ENCODE measurements at regions of chr1 and their contacts with region 1.

Region 1: GRCh38 chr1:82775402-82776000 is 974.8 kb downstream of the ADGRL2 start:
- DNase-seq: peak; percentile 6
- ATAC-seq: peak; percentile 72; the same call in 1 of the 2 replicates
- H3K4me3 ChIP-seq: no peak overlapping the region
- H3K27ac ChIP-seq: no peak overlapping the region
- H3K4me1 ChIP-seq: no peaks in the 10 kb centered on the region
- H3K27me3 ChIP-seq: no peaks in the 10 kb centered on the region
- CTCF ChIP-seq: peak; percentile 9 to 82 (median 71); a peak in 5 of 6 replicates
- POLR2A ChIP-seq: no peak
- RAD21 ChIP-seq: peak; percentile 52

Region 2: DNA sequence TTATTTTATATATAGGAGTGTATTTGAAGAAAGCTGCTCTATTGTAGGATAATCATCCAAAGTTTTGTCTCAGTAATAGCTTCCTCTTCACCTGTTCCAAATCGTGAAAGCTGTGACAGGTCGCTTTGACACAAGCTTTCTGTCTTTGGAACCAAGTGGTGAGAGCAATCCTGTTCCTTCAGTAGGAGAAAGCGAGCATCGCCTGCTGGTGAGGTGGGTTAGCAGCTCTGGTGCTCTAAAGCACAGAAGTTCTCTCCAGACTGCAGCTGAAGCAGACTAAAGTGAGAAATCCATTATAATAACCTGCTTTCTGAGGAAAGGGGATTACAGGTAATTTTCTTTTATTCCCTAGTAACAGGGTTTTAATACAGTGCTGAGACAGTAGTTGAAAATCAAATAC is 171.0 kb before region 1 on chr1:
- CTCF ChIA-PET with region 1: no interaction called
- POLR2A ChIA-PET with region 1: no interaction called
- RAD21 ChIA-PET with region 1: no interaction called
- intact Hi-C with region 1: no loop called
- DNase-seq: no peak
- ATAC-seq: no peak
- H3K4me3 ChIP-seq: no peak overlapping the region
- H3K27ac ChIP-seq: no peak overlapping the region
- H3K4me1 ChIP-seq: no peaks in the 10 kb centered on the region
- H3K27me3 ChIP-seq: no peaks in the 10 kb centered on the region
- CTCF ChIP-seq: peak in 2 of 3 experiments; percentile 22 to 24; a peak in 2 of 6 replicates
- POLR2A ChIP-seq: no peak
- RAD21 ChIP-seq: peak; percentile 34

Region 3: GRCh38 chr1:83857103-83857502 is 1081.6 kb after region 1 on chr1:
- CTCF ChIA-PET with region 1: no interaction called
- POLR2A ChIA-PET with region 1: no interaction called
- RAD21 ChIA-PET with region 1: no interaction called
- intact Hi-C with region 1: loop called (anchors 10 kb)
- DNase-seq: no peak
- ATAC-seq: no peak
- H3K4me3 ChIP-seq: no peak overlapping the region
- H3K27ac ChIP-seq: no peak overlapping the region
- H3K4me1 ChIP-seq: no peaks in the 10 kb centered on the region
- H3K27me3 ChIP-seq: no peaks in the 10 kb centered on the region
- CTCF ChIP-seq: peak in 2 of 3 experiments; percentile 17 to 40; a peak in 2 of 6 replicates
- POLR2A ChIP-seq: no peak
- RAD21 ChIP-seq: peak; percentile 51